ENCODE measurements at regions of chr11 and their contacts with region 1.

Region 1: DNA sequence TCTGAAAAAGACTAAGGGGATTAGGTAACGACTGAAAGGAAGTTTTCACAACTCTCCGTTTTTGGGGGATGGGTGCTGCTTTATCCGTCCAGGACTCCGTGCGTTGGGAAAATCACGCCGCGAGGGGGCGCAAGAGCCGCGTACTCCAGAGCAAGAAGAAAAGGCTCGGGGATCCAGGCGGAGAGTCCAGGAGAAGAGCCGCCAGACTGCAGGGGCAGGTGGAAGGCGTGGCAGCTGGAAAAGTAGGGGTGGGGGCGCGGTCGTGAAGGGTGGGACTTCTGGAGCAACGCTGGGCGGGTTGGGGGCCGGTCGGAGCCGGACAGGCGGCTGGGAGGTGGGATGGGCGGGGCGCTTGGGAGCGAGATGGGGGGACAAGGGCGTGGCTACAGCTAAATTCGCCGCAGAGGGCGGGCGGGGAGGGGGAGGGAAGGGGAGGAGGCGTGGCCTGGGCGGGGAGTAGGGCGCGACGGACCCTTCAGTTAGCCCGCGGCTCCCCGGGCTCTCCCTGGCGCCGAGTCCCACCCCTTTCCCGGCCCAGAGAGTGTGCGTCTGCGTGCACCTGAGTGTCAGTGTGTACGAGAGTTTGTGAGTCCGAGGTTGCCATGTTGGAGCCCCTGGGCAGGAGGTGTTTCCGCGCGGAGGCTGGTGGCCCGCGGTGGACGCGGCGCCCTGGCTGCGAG is 613 bp upstream of the ARHGEF17 start:
- DNase-seq: peak; percentile 96
- ATAC-seq: peak; percentile 82
- H3K4me3 Mint-ChIP-seq: peak overlapping the region; percentile 80
- H3K27ac Mint-ChIP-seq: no peak overlapping the region
- H3K4me1 Mint-ChIP-seq: peaks cover 5% of the 10 kb centered on the region
- H3K27me3 Mint-ChIP-seq: peaks cover 20% of the 10 kb centered on the region

Region 2: DNA sequence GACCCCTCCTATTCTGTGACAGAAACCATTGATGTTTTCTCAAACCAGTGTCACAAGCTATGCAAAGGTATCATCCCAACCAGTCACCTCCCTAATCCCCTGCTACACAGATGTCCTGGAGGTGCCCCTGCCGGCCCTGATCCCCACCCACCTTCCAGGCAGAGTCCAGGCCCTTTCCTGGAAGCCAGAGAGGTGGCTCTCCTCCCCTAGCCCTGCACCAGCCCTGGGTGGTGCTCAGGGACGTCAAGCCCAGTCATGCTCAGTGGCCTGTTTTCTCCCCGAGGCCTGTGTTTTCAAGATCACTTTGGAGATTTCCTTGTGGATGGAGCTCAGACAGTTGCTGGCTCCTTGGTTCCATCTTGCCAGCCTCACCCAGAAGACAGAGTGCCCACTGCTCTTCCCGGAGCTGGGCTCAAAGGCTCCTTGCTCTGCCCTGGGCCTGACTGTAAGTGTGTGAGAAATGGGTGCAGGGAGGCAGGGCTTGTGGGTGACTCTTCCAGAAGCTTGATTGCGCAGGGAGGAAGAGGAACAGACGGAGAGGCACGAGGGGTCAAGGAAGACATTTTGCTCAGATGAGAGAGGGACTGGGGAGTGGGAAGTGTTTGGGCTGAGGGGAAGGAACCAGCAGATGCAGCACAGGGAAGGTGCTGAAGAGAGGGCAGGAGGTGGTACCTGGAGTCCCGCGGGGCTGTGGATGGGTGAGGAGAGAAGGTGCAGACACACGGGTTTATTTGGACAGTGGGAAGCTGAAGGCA is 24.0 kb before region 1 on chr11:
- CTCF ChIA-PET with region 1: interaction called, 15 read pairs
- POLR2A ChIA-PET with region 1: no interaction called
- intact Hi-C with region 1: no loop called
- DNase-seq: no peak
- ATAC-seq: no peak
- H3K4me3 Mint-ChIP-seq: no peak overlapping the region
- H3K27ac Mint-ChIP-seq: no peak overlapping the region
- H3K4me1 Mint-ChIP-seq: no peaks in the 10 kb centered on the region
- H3K27me3 Mint-ChIP-seq: no peaks in the 10 kb centered on the region

Region 3: GRCh38 chr11:73288873-73289707 is 18.4 kb before region 1 on chr11:
- CTCF ChIA-PET with region 1: interaction called, 20 read pairs
- POLR2A ChIA-PET with region 1: interaction called, 4 read pairs
- intact Hi-C with region 1: no loop called
- DNase-seq: peak; percentile 75
- ATAC-seq: peak; percentile 86
- H3K4me3 Mint-ChIP-seq: no peak overlapping the region
- H3K27ac Mint-ChIP-seq: no peak overlapping the region
- H3K4me1 Mint-ChIP-seq: peaks cover 6% of the 10 kb centered on the region
- H3K27me3 Mint-ChIP-seq: no peaks in the 10 kb centered on the region

Region 4: GRCh38 chr11:73295231-73295995 is 12.1 kb before region 1 on chr11:
- CTCF ChIA-PET with region 1: interaction called, 20 read pairs
- POLR2A ChIA-PET with region 1: interaction called, 4 read pairs
- intact Hi-C with region 1: no loop called
- DNase-seq: peak; percentile 89
- ATAC-seq: peak; percentile 97
- H3K4me3 Mint-ChIP-seq: no peak overlapping the region
- H3K27ac Mint-ChIP-seq: no peak overlapping the region
- H3K4me1 Mint-ChIP-seq: peaks cover 2% of the 10 kb centered on the region
- H3K27me3 Mint-ChIP-seq: peaks cover 1% of the 10 kb centered on the region

Region 5: DNA sequence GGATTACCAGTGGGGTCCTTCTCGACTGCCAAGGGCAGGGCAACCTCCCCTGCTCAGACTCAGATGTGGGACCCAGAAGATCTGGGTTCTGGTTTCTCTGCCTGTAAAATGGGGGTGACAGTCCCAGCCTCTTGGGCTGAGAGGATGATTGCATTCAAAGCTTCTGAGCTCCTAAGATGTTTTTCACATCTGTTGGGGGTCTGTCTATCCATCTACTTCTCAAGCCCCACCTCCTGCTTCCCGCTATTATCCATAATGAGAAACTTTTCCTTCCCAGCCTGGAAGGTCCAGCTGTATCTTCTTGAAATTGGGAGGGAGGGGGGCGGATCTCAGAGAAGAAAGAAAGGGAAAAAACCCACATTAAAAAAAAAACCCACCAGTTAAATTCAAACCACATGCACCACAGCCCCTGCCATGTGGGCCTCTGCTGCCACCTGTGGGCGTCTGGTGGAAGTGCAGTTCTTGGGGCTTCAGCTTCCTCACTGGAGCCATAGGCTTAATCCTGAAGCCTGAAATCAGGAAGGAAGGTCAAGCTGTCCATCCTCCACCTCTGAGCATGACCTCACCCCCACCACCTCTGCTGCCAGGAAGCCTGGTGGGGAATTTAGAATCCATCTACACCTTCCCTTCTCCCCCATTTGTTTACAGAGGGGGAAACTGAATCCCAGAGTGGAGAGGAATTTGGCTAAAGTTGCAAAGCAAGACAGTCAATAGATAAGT is 27.9 kb after region 1 on chr11:
- CTCF ChIA-PET with region 1: interaction called, 91 read pairs
- POLR2A ChIA-PET with region 1: no interaction called
- intact Hi-C with region 1: loop called (anchors 1 kb)
- DNase-seq: peak; percentile 86
- ATAC-seq: peak; percentile 63
- H3K4me3 Mint-ChIP-seq: no peak overlapping the region
- H3K27ac Mint-ChIP-seq: no peak overlapping the region
- H3K4me1 Mint-ChIP-seq: no peaks in the 10 kb centered on the region
- H3K27me3 Mint-ChIP-seq: no peaks in the 10 kb centered on the region

Region 6: DNA sequence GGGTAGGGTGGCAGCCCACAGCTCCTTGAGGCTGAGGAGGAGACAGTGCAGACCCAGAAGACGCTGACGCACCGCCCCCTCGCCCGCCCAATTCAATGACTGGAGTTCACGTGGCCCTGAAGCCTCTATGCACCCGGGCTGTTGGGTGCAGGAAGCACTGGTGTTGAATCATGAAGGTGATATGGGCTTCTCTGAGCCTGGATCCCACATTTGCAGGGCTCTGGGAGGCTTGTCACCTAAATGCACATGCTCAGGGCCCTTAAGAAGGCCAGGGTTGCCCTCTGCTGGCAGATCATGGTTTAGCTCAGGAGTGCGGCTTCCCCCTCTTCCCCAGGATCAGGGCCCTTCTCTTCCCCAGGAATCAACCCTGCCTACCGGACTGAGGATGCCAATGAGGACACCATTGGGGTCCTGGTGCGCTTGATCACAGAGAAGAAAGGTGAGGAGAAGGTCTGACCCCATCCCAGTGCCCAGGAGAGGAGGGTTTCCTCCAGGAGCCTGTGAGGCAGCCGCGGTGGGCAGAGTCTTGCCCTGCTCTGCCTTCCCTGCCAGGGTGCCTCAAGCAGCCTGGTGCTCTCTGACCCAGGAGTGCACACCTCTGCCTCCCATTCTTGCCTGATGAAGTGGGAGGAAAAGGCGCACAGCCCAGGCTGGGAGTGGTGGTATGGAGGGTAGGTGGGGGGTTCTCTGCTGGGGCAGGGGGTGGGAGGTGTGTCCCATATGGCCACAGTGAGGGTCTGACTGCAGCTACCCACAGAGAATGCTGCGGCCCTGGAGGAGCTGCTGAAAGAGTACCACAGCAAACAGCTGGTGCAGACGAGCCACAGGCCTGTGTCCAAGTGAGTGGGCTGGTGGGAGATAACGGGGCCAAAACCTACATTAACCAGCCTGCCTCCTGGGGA is 86.3 kb after region 1 on chr11:
- CTCF ChIA-PET with region 1: no interaction called
- POLR2A ChIA-PET with region 1: no interaction called
- intact Hi-C with region 1: loop called in 1 of 2 experiments (anchors 1 kb)
- DNase-seq: peak; percentile 77
- ATAC-seq: peak; percentile 87
- H3K4me3 Mint-ChIP-seq: no peak overlapping the region
- H3K27ac Mint-ChIP-seq: no peak overlapping the region
- H3K4me1 Mint-ChIP-seq: no peaks in the 10 kb centered on the region
- H3K27me3 Mint-ChIP-seq: no peaks in the 10 kb centered on the region

Region 7: DNA sequence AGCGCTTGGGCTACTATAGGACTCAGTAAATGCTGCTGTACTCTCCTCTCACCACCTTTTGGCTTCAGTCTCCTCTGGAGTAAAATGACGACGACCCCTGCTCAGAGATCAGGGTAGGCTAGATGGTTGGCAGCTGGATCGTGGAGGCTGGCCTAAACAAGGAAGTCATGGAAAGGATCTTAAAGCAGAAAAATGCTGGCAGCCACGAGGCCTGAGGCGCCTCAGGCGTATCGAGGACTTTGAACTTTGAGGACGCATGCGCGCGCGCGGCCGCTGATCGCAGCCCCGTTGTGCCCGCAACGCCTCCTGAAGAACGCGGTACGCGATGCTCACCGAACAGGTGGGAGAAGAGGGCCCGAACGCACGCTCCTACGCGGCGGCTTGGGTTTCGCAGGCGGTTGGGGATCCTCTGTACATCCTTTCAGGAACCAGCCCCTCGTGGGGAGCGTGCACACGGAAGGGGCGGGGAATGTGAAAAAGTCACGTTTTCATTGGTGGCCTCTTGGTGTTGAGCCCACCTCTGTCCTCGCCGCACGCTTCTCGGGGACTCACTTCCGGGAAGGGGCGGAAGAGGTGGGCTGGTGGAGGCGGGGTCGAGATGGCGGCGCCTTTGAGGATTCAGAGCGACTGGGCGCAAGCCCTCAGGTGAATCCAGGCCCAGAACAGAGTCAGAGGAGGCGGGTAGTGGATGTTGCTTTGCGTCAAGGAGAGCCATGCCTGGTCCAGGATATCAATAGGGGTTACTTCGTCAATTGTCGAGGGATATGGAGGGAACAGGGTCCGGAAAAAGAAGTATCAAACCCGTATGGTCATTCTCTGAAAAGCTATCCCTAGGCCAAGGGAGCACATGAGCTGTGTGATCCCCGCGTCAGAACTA is 569.2 kb after region 1 on chr11 and contains the starts of genes COA4 and PAAF1:
- CTCF ChIA-PET with region 1: no interaction called
- POLR2A ChIA-PET with region 1: no interaction called
- intact Hi-C with region 1: loop called in 1 of 2 experiments (anchors 1 kb)
- DNase-seq: peak; percentile 97
- ATAC-seq: peak; percentile 95
- H3K4me3 Mint-ChIP-seq: peak within 1 kb of the TSS; percentile 93
- H3K27ac Mint-ChIP-seq: peak within 1 kb of the TSS; percentile 100
- H3K4me1 Mint-ChIP-seq: peaks cover 32% of the 10 kb centered on the region
- H3K27me3 Mint-ChIP-seq: no peaks in the 10 kb centered on the region
- total RNA-seq, gene COA4: 103 to 112 TPM
- total RNA-seq, gene PAAF1: 34.2 to 34.8 TPM